ENCODE measurements at regions of chr17 and their contacts with region 1.

Region 1: GRCh38 chr17:8745586-8746500 is 1.2 kb upstream of the CCDC42 start:
- DNase-seq: peak; percentile 41 to 70 (median 60)
- H3K4me3 ChIP-seq: peak overlapping the region; percentile 2 to 70 (median 32)
- H3K27ac ChIP-seq: peak overlapping the region in 1 of 5 donors; percentile 18
- H3K4me1 ChIP-seq: peaks cover 0 to 4% of the 10 kb centered on the region in 2 donors
- H3K27me3 ChIP-seq: no peaks in the 10 kb centered on the region
- CTCF ChIP-seq: peak; percentile 69 to 96 (median 82)
- POLR2A ChIP-seq: no peak

Region 2: GRCh38 chr17:8383143-8383822 is 362.6 kb before region 1 on chr17 and contains the start of gene RPL26:
- intact Hi-C with region 1: loop called in 1 of 2 experiments (anchors 10 kb)
- DNase-seq: peak; percentile 96 to 99 (median 98)
- H3K4me3 ChIP-seq: peak within 1 kb of the TSS; percentile 52 to 90 (median 67)
- H3K27ac ChIP-seq: peak within 1 kb of the TSS; percentile 15 to 91 (median 69)
- H3K4me1 ChIP-seq: peaks cover 8 to 43% of the 10 kb centered on the region in 2 donors
- H3K27me3 ChIP-seq: no peaks in the 10 kb centered on the region
- CTCF ChIP-seq: peak; percentile 96 to 100 (median 99)
- POLR2A ChIP-seq: peak; percentile 45 to 83
- total RNA-seq, gene RPL26: 1,250 to 3,973 (median 2,001) TPM

Region 3: GRCh38 chr17:8409966-8410864 is 335.6 kb before region 1 on chr17:
- intact Hi-C with region 1: loop called (anchors 5 to 10 kb)
- DNase-seq: peak; percentile 88 to 96 (median 91)
- H3K4me3 ChIP-seq: no peak overlapping the region
- H3K27ac ChIP-seq: no peak overlapping the region
- H3K4me1 ChIP-seq: no peaks in the 10 kb centered on the region
- H3K27me3 ChIP-seq: no peaks in the 10 kb centered on the region
- CTCF ChIP-seq: peak; percentile 86 to 93 (median 89)
- POLR2A ChIP-seq: no peak

Region 4: GRCh38 chr17:8470447-8471047 is 275.3 kb before region 1 on chr17:
- intact Hi-C with region 1: loop called in 1 of 2 experiments (anchors 10 kb)
- DNase-seq: peak; percentile 91 to 97 (median 96)
- H3K4me3 ChIP-seq: no peak overlapping the region
- H3K27ac ChIP-seq: peak overlapping the region; percentile 56 to 86 (median 74)
- H3K4me1 ChIP-seq: peaks cover 6 to 19% of the 10 kb centered on the region in 2 donors
- H3K27me3 ChIP-seq: no peaks in the 10 kb centered on the region
- CTCF ChIP-seq: no peak
- POLR2A ChIP-seq: peak in 1 of 2 donors; percentile 57

Region 5: DNA sequence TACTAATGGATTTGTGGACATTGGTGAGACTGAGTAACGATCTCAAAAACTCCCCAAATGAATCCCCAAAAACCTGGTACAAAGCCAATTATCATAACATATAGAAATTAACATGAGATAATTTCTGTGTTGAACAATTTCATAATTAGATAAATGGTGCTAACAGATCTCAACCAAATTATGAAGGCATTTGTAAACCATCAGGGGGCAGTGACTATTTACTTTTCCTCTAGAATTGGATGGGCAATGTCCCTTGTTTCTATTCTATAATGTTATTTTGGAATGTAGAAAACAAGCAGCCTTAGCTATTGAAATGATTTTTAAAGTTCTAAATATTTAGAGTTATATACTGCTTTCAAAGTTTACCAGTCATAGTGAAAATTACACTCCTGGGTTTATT is 173.1 kb before region 1 on chr17:
- intact Hi-C with region 1: loop called in 1 of 2 experiments (anchors 10 kb)
- DNase-seq: no peak
- H3K4me3 ChIP-seq: no peak overlapping the region
- H3K27ac ChIP-seq: no peak overlapping the region
- H3K4me1 ChIP-seq: no peaks in the 10 kb centered on the region
- H3K27me3 ChIP-seq: no peaks in the 10 kb centered on the region
- CTCF ChIP-seq: peak in 4 of 6 experiments; percentile 8 to 37 (median 30)
- POLR2A ChIP-seq: no peak

Region 6: GRCh38 chr17:8698162-8699061 is 47.4 kb before region 1 on chr17:
- intact Hi-C with region 1: no loop called
- DNase-seq: peak; percentile 32 to 80 (median 55)
- H3K4me3 ChIP-seq: peak overlapping the region in 1 of 4 donors; percentile 19
- H3K27ac ChIP-seq: peak overlapping the region in 2 of 5 donors; percentile 6 to 43
- H3K4me1 ChIP-seq: peaks cover 0 to 6% of the 10 kb centered on the region in 2 donors
- H3K27me3 ChIP-seq: no peaks in the 10 kb centered on the region
- CTCF ChIP-seq: no peak
- POLR2A ChIP-seq: no peak

Measured in adrenal gland (tissue), 19 donors.